ENCODE measurements at regions of chr13 and their contacts with region 1.

Region 1: DNA sequence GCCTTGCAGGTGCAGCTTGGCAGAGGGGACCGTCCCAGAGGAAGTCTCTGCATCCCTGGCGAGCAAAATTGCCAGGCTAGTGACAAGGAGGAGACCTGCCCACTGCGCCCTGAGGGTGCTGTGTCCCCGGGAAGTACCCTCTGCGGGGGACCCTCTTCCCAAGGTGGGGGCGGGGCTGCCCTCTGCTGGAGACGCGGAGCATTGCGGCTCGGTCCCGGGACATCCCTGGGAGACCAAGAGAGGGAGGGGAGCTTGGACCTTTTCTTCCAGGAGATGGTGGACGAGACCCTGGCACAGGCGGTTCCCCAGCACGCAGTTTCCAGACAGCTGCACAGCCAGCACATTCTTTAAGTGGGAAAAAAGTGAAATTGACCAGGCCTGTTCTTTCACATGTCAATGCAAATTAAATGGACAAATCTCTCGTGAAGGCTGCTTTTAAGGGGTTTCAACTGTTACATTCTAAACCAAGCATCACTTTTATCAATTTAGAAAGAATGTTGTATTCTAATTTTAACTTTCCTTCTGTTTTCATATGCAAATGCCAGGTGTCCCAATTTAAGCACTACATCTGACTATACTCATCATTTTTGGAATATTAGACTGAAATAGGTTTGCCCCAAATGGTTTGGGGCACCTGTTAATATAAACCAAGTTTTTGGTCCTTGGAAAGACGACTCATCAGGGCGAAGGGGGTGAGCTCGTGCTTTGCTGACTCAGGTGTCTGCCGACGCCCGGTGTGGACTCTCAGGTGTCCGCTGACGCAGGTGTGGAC is 60.7 kb downstream of the MCF2L start:
- DNase-seq: peak in 2 of 3 donors; percentile 30 to 40
- H3K4me3 ChIP-seq: no peak overlapping the region
- H3K27ac ChIP-seq: no peak overlapping the region
- H3K4me1 ChIP-seq: no peaks in the 10 kb centered on the region
- H3K27me3 ChIP-seq: no peaks in the 10 kb centered on the region

Region 2: DNA sequence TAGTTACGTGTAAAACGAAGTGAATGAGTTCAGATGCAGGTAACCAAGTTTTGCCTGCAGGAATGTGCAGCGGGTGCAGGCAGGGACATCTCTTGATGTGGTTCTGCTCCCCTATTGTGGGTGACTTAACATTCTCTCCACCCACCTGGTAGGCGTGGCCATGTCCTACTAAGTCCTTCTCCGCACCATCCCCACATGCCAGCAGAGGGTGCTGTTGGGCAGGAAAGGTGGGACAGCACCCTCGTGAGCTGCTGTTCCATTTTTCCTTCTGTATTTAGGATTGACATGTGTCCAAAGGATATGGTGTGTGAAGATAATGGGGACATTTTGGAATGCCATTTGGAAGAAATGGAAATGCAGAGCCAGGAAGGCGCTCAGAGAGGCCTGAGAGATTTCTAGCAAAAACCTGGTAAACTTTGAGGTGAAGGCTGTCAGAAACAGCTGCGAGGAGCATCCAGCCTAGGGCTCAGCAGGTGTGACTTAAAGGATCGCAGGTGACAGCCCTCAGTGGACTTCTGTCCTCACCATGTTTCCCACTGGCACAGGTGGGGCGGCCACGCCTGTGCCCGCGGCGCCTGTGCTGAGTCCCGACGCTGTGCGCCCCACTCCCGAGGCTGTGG is 86.9 kb before region 1 on chr13:
- CTCF ChIA-PET with region 1: interaction called, 50 read pairs
- POLR2A ChIA-PET with region 1: no interaction called
- DNase-seq: peak; percentile 95 to 98 (median 95)
- H3K4me3 ChIP-seq: peak overlapping the region in 6 of 7 experiments; percentile 11 to 74 (median 63)
- H3K27ac ChIP-seq: no peak overlapping the region
- H3K4me1 ChIP-seq: peaks cover 0 to 17% (median 14%) of the 10 kb centered on the region in 4 experiments
- H3K27me3 ChIP-seq: peaks cover 0 to 21% (median 7%) of the 10 kb centered on the region in 5 experiments

Region 3: GRCh38 chr13:112968908-112969691 is 60.6 kb before region 1 on chr13 and contains the start of gene MCF2L:
- CTCF ChIA-PET with region 1: interaction called, 32 read pairs
- POLR2A ChIA-PET with region 1: no interaction called
- DNase-seq: peak; percentile 72 to 86 (median 84)
- H3K4me3 ChIP-seq: peak within 1 kb of the TSS in 6 of 7 experiments; percentile 40 to 75 (median 61)
- H3K27ac ChIP-seq: no peak within 1 kb of the TSS
- H3K4me1 ChIP-seq: peaks cover 0 to 24% (median 19%) of the 10 kb centered on the region in 4 experiments
- H3K27me3 ChIP-seq: peaks cover 0 to 24% (median 12%) of the 10 kb centered on the region in 5 experiments

Region 4: GRCh38 chr13:112997268-112997667 is 32.4 kb before region 1 on chr13:
- CTCF ChIA-PET with region 1: interaction called, 11 read pairs
- POLR2A ChIA-PET with region 1: no interaction called
- DNase-seq: no peak
- H3K4me3 ChIP-seq: no peak overlapping the region
- H3K27ac ChIP-seq: no peak overlapping the region
- H3K4me1 ChIP-seq: peaks cover 0 to 45% (median 33%) of the 10 kb centered on the region in 4 experiments
- H3K27me3 ChIP-seq: peaks cover 0 to 3% (median 0%) of the 10 kb centered on the region in 5 experiments